Heart left ventricle (tissue), 16 donors: ENCODE measurements at regions of chr5 and their contacts with region 1.

Region 1: GRCh38 chr5:116068028-116068632 is 16.7 kb upstream of the COMMD10 start:
- DNase-seq: no peak
- ATAC-seq: no peak
- H3K4me3 ChIP-seq: no peak overlapping the region
- H3K27ac ChIP-seq: no peak overlapping the region
- H3K4me1 ChIP-seq: peaks cover 0 to 2% (median 0%) of the 10 kb centered on the region in 12 donors
- H3K27me3 ChIP-seq: peaks cover 0 to 10% (median 0%) of the 10 kb centered on the region in 9 donors
- CTCF ChIP-seq: peak; percentile 77 to 92 (median 86)
- POLR2A ChIP-seq: no peak

Region 2: DNA sequence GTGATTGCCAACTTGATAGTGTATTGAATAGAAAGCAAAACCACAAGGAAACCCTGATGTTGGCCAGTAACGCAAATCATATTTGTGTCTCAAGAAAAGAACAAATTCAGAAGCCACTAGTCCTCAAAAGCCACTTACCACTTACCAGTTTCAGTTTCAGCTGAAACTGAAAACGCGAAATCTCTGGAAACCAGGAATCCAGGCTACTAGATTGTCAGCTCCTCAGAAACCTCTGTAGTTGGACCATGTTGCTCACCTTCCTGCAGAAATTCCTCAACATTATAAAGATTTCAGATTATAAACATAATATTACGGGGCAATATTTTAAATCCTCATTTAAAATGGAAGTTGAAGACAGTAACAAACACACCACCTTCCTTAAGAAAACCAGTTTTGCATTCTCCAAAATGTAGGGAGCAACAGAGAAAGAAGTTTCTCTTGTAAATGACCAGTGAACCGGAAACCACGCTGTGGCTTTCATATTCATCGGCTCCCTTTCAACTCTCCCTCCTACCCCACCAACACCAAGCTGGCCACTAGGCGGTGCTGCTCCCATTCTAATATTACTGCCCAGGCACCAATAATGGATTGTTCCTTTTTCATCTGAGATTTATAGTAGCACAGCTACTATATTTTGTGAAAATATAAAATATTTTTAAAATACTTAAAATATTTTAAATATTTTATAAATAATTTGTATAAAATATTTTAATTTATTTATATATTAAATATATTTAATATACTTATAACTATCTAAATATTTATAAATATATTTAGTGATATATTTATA is 433.6 kb before region 1 on chr5:
- intact Hi-C with region 1: loop called in 6 of 10 experiments (anchors 2 to 5 kb)
- DNase-seq: peak; percentile 82 to 89 (median 86)
- ATAC-seq: peak; percentile 78 to 98 (median 96)
- H3K4me3 ChIP-seq: peak overlapping the region in 10 of 12 donors; percentile 0 to 56 (median 48)
- H3K27ac ChIP-seq: peak overlapping the region in 10 of 12 donors; percentile 2 to 82 (median 50)
- H3K4me1 ChIP-seq: peaks cover 0 to 10% (median 0%) of the 10 kb centered on the region in 12 donors
- H3K27me3 ChIP-seq: no peaks in the 10 kb centered on the region
- CTCF ChIP-seq: peak; percentile 79 to 97 (median 90)
- POLR2A ChIP-seq: no peak

Region 3: GRCh38 chr5:115831163-115831768 is 236.9 kb before region 1 on chr5:
- intact Hi-C with region 1: loop called in 3 of 10 experiments (anchors 5 to 10 kb)
- DNase-seq: no peak
- ATAC-seq: peak in 1 of 4 donors; percentile 51
- H3K4me3 ChIP-seq: no peak overlapping the region
- H3K27ac ChIP-seq: no peak overlapping the region
- H3K4me1 ChIP-seq: no peaks in the 10 kb centered on the region
- H3K27me3 ChIP-seq: no peaks in the 10 kb centered on the region
- CTCF ChIP-seq: peak; percentile 62 to 83 (median 73)
- POLR2A ChIP-seq: no peak

Region 4: DNA sequence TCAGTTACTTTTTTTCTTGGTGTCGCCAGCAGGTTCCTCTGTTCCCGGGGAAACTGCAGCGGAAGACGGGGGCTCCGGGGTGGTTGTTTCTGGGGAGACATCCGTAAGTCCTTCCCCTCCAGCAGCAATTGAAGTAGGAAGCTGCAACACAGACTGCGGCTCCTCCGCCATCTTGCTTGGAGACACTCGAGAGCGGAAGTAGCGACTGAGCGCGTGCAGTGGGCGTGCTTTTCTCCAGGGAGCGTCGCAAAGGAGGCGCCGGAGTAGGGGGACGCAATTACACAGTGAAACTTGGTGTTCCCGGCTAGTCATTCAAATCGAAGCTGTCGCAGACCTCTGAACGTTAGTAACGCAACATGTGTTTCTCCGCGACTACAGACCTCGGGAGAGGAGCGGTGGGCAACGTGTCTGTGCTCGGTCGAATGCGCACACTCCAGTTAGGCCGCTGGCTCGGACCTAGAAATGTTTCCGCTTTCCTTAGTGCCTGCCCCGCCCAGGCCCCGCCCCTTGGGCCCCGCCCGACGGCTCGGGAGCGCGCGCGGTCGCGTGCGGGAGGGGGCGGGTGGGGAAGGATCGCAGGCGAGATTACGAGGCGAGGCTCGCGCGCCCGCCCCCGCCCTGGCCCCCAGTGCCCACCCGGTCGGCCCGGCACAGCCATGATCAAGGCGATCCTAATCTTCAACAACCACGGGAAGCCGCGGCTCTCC is 226.6 kb before region 1 on chr5 and contains the starts of genes AP3S1 and ATG12:
- intact Hi-C with region 1: loop called in 4 of 10 experiments (anchors 5 to 10 kb)
- DNase-seq: peak; percentile 92 to 95 (median 93)
- ATAC-seq: peak; percentile 91 to 97 (median 96)
- H3K4me3 ChIP-seq: peak within 1 kb of the TSS; percentile 73 to 97 (median 86)
- H3K27ac ChIP-seq: peak within 1 kb of the TSS; percentile 88 to 98 (median 96)
- H3K4me1 ChIP-seq: peaks cover 0 to 74% (median 60%) of the 10 kb centered on the region in 12 donors
- H3K27me3 ChIP-seq: no peaks in the 10 kb centered on the region
- CTCF ChIP-seq: no peak
- POLR2A ChIP-seq: peak in 1 of 2 donors; percentile 42
- total RNA-seq, gene AP3S1: 20.3 to 56.4 (median 46.6) TPM
- total RNA-seq, gene ATG12: 15.3 to 29.2 (median 20.8) TPM

Region 5: GRCh38 chr5:115888027-115888426 is 180.1 kb before region 1 on chr5:
- intact Hi-C with region 1: loop called in 5 of 10 experiments (anchors 5 to 10 kb)
- DNase-seq: no peak
- ATAC-seq: no peak
- H3K4me3 ChIP-seq: no peak overlapping the region
- H3K27ac ChIP-seq: no peak overlapping the region
- H3K4me1 ChIP-seq: no peaks in the 10 kb centered on the region
- H3K27me3 ChIP-seq: no peaks in the 10 kb centered on the region
- CTCF ChIP-seq: peak in 5 of 12 donors; percentile 6 to 32 (median 19)
- POLR2A ChIP-seq: no peak

Region 6: DNA sequence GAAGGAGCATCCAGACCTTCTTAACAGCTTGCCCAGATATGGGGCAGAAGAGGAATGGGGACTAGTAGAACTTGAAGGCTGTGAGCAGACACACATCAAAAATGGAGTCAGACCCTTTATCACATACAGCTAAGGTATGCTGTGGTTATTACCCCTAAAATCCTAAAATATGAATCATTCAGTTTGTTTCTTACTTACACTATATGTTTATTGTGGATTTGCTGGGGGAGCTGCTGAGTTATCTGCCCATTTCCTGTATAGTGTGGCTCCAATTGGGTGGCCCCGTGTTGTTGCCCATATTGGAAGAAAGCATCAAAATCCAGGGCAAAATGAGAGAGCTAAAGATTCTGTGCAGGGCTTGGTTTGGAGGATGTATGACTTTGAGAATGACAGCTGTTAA is 169.5 kb before region 1 on chr5:
- intact Hi-C with region 1: loop called in 1 of 10 experiments (anchors 10 kb)
- DNase-seq: no peak
- ATAC-seq: no peak
- H3K4me3 ChIP-seq: no peak overlapping the region
- H3K27ac ChIP-seq: no peak overlapping the region
- H3K4me1 ChIP-seq: no peaks in the 10 kb centered on the region
- H3K27me3 ChIP-seq: no peaks in the 10 kb centered on the region
- CTCF ChIP-seq: no peak
- POLR2A ChIP-seq: no peak

Region 7: DNA sequence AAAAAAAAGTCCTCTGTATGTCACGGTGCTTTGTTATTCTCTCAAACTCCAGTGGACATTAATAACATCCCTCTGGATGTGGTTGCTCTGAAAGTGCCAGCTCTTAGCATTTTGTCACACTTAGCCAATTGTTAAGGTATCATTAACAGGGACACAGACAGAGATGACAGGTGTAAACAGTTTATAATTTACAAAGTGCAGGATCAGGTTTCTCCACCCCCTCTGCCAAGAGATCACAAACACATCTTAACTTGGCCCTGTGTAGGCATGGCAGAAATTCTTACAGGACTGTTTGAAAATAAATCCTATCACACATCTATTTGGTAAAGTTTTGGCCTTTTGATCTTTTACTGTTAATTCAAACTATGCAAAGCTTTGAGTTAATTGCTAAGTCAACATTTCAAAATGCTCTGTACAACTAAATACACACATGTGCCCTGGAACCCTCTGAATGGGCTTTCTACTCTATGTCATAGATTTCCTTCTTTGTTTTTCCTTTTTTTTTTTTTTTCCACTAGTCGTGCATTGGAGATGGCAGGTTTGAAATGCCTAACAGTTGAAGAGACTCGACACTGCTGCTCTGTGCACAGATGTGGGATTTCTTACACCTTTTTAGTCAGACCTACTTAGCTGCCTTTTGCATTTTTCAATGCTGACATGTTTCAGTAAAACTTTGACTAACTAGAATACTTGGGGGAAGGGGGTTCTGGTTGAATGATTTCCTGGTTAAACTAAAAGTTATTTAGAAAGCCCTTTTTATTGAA is 464.8 kb after region 1 on chr5:
- intact Hi-C with region 1: no loop called
- DNase-seq: no peak
- ATAC-seq: no peak
- H3K4me3 ChIP-seq: no peak overlapping the region
- H3K27ac ChIP-seq: no peak overlapping the region
- H3K4me1 ChIP-seq: peaks cover 0 to 36% (median 18%) of the 10 kb centered on the region in 12 donors
- H3K27me3 ChIP-seq: no peaks in the 10 kb centered on the region
- CTCF ChIP-seq: no peak
- POLR2A ChIP-seq: no peak